ENCODE measurements at regions of chr9 and their contacts with region 1.

Region 1: GRCh38 chr9:89278997-89279739 is 31.8 kb upstream of the CKS2 start:
- DNase-seq: peak; percentile 74
- H3K4me3 ChIP-seq: no peak overlapping the region
- H3K27ac ChIP-seq: no peak overlapping the region
- H3K4me1 ChIP-seq: no peaks in the 10 kb centered on the region
- H3K27me3 ChIP-seq: no peaks in the 10 kb centered on the region
- CTCF ChIP-seq: peak; percentile 76

Region 2: GRCh38 chr9:88593537-88594185 is 685.5 kb before region 1 on chr9:
- CTCF ChIA-PET with region 1: no interaction called
- POLR2A ChIA-PET with region 1: no interaction called
- intact Hi-C with region 1: loop called (anchors 10 kb)
- DNase-seq: peak; percentile 85
- H3K4me3 ChIP-seq: no peak overlapping the region
- H3K27ac ChIP-seq: no peak overlapping the region
- H3K4me1 ChIP-seq: peaks cover 6% of the 10 kb centered on the region
- H3K27me3 ChIP-seq: no peaks in the 10 kb centered on the region
- CTCF ChIP-seq: peak; percentile 74

Region 3: DNA sequence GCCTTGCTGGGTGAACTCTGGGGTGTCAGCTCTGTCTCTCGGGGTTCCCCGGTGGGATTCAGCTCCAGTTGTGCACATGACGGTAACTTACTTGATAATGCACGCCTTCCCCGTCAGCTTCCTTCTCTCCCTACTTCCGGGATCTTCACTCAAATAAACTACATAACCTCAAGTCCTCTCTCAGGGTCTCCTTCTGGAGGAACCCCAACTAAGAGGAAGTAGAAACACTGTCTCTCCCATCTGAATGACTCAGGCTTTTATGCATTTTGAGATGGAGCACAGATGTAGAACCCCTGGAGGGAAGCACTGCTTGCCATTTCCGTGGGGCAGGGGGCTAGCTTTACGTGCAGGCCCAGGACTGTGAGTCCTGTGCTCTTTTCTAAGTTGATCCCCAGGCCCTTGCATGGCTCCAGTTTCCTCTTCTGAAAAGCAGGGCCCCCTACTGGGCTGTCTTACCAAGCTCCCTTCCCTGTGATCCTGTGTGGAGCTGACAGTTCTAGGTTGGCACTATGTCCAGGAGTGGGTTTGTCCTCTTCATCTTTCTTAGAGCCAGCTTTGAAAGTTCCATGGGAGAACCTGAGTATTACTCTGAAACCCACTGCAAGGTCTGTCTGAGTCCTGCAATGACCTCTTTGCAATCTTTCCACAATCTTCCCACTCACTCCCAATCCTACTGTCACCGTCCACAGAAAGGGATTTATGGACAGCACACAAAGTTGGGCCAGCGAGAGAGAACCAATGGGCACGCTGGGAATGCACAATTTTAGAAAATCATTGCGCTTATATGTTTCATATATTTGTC is 270.2 kb before region 1 on chr9:
- CTCF ChIA-PET with region 1: interaction called, 3 read pairs
- POLR2A ChIA-PET with region 1: no interaction called
- intact Hi-C with region 1: loop called (anchors 5 kb)
- DNase-seq: peak; percentile 77
- H3K4me3 ChIP-seq: no peak overlapping the region
- H3K27ac ChIP-seq: peak overlapping the region; percentile 33
- H3K4me1 ChIP-seq: peaks cover 43% of the 10 kb centered on the region
- H3K27me3 ChIP-seq: no peaks in the 10 kb centered on the region
- CTCF ChIP-seq: peak; percentile 54

Region 4: GRCh38 chr9:89179895-89180667 is 99.1 kb before region 1 on chr9:
- CTCF ChIA-PET with region 1: interaction called, 3 read pairs
- POLR2A ChIA-PET with region 1: no interaction called
- intact Hi-C with region 1: loop called (anchors 2 kb)
- DNase-seq: peak; percentile 97
- H3K4me3 ChIP-seq: peak overlapping the region; percentile 54
- H3K27ac ChIP-seq: peak overlapping the region; percentile 83
- H3K4me1 ChIP-seq: peaks cover 27% of the 10 kb centered on the region
- H3K27me3 ChIP-seq: peaks cover 5% of the 10 kb centered on the region
- CTCF ChIP-seq: no peak